Left colon (tissue), 2 donors: ENCODE measurements at regions of chr3 and their contacts with region 1.

Region 1: GRCh38 chr3:146589899-146590508 is 15.1 kb downstream of the PLSCR5 start:
- DNase-seq: peak in 1 of 2 donors; percentile 37
- ATAC-seq: peak; percentile 34

Region 2: GRCh38 chr3:146218880-146219866 is 370.8 kb before region 1 on chr3:
- intact Hi-C with region 1: loop called in 1 of 2 experiments (anchors 10 kb)
- DNase-seq: peak in 1 of 2 donors; percentile 40
- ATAC-seq: no peak

Region 3: DNA sequence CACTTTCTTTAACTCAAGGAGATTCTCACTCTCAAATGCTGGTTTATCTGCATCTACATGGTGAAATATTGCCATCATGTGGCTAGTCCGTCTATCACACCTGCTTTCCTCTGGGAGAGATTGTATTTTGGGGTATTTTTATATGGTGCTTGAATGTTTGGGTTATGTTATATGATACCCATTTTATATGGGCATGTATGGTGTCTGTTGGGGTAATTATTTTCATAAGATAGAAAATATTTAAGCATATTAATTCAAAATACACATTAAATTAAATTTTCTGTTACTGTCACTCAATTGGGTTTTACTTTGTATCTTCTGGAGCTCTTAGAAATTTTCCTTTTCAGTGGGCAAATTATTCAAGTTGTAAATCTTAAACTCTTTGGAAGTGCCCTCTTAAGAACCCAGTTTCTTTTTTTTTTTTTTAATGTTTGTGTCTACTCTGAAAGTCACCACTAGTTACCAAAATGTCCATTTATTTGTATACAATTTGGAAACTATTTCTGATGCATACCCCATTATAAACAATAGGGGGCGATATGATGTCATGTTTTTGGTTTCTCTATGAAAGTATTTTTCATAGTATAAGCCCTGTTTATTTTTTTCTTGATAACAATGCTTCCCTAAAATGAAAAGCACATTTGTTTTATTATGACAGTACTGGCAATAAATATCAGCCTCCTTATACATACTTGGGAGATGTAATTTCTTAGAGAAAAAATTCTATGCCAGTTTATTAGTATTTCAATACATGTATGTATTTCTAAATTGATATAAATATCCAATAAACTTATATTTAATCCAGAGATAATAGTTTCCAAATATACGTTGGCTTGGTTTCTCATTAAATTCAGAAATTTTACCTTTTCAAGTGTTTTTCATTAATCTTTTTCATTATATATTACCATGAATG is 51.2 kb after region 1 on chr3:
- intact Hi-C with region 1: loop called in 1 of 2 experiments (anchors 5 kb)
- DNase-seq: no peak
- ATAC-seq: peak; percentile 42